Uterus (tissue), 4 donors: ENCODE measurements at regions of chr20 and their contacts with region 1.

Region 1: GRCh38 chr20:2172305-2173175 is 70.9 kb downstream of the STK35 start:
- DNase-seq: peak; percentile 75 to 78
- H3K4me3 ChIP-seq: no peak overlapping the region
- H3K27ac ChIP-seq: no peak overlapping the region
- H3K4me1 ChIP-seq: no peaks in the 10 kb centered on the region
- H3K27me3 ChIP-seq: no peaks in the 10 kb centered on the region
- CTCF ChIP-seq: peak; percentile 86 to 91 (median 88)
- POLR2A ChIP-seq: no peak

Region 2: DNA sequence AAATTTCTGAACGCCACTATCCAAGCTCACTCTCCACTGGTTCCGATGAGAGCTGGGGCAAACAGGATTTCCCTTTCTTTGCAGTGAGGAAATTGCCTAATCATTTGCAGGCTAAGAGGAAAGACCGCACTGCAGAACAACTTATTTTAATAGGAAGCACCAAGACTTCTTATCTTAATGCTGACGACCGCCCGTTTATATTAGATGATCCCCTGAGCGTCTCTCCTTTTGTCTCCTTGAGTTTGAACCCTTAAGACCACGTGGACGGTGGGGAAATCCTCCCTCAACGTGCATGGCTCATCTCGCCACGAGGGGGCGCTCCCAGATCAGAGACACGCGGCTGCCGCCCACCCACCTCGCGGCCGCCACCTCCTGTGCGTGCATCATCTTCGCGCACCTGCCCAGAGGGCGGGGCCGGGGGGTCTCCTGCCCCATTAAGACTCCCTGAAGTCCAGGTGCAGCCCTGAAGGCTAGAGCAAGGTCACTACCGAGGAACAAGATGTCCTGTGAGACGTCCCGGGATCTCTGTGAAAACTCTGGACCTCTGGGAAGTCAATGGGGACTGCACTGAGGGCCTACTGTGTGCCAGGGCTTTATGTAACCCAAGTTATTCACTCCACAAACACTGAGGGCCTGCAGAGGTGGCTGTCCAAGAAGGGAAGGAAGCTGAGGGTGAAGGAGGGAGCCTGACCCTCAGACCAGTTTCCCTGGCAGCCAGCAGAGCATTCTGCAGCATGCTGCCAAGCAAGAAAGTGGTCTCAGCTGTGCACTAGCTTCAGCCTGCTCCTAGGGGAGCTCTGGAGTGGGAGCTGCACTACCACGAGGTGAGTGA is 206.8 kb before region 1 on chr20:
- intact Hi-C with region 1: loop called (anchors 5 kb)
- DNase-seq: peak; percentile 67 to 73
- H3K4me3 ChIP-seq: no peak overlapping the region
- H3K27ac ChIP-seq: no peak overlapping the region
- H3K4me1 ChIP-seq: no peaks in the 10 kb centered on the region
- H3K27me3 ChIP-seq: no peaks in the 10 kb centered on the region
- CTCF ChIP-seq: peak; percentile 78 to 92 (median 84)
- POLR2A ChIP-seq: no peak

Region 3: GRCh38 chr20:2093159-2093781 is 79.3 kb before region 1 on chr20:
- intact Hi-C with region 1: loop called (anchors 10 kb)
- DNase-seq: no peak
- H3K4me3 ChIP-seq: no peak overlapping the region
- H3K27ac ChIP-seq: no peak overlapping the region
- H3K4me1 ChIP-seq: no peaks in the 10 kb centered on the region
- H3K27me3 ChIP-seq: peaks cover 0 to 8% of the 10 kb centered on the region in 2 donors
- CTCF ChIP-seq: no peak
- POLR2A ChIP-seq: no peak